Activated T-helper 1 cell treated with anti-CD3 and anti-CD28 coated beads, Interleukin-12 subunit alpha, Interleukin-12 subunit beta, Interleukin-2, Interleukin-4 antibody, amounts not matched to agents 30 ng/mL and 10 ng/mL and 1 ng/mL, durations not matched to agents 14 hours and 24 hours and 36 hours (primary cell): ENCODE measurements at regions of chr22 and their contacts with region 1.

Region 1: DNA sequence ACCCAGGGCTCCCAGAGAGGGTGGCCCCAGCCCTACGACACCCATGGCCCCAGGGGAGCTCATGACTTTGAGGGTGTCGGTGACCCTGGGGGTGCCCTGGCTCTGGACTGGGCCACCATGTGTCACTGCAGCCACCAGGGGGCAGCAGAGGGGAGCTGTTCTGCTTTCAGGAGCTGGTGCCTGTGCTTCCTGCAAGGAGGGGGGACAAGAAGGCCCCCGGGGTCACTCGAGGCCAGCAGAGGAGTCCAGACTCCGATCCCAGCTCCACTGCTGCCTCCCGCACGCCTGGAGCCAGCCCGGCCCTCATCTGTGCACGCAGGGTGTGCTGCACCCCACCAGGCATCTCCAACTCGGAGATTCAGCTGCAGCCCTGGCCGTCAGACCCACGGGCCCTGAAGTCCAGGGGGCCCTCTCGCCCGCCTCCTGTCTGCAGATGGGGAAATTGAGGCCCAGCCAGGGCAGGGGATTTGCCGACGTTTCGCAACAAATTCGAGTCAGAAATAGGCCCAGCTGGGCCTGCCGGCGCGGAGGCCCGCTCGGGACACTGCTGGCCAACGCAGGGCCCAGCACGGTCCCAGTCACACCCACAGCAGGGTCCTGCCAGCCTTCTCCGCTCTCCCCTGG is 29.5 kb upstream of the WNT7B start:
- DNase-seq: peak; percentile 75
- H3K4me3 Mint-ChIP-seq: no peak overlapping the region
- H3K27ac Mint-ChIP-seq: no peak overlapping the region
- H3K4me1 Mint-ChIP-seq: peaks cover 5% of the 10 kb centered on the region
- H3K27me3 Mint-ChIP-seq: peaks cover 2% of the 10 kb centered on the region

Region 2: GRCh38 chr22:45911601-45912271 is 94.8 kb before region 1 on chr22:
- intact Hi-C with region 1: no loop called
- DNase-seq: no peak
- H3K4me3 Mint-ChIP-seq: no peak overlapping the region
- H3K27ac Mint-ChIP-seq: no peak overlapping the region
- H3K4me1 Mint-ChIP-seq: no peaks in the 10 kb centered on the region
- H3K27me3 Mint-ChIP-seq: no peaks in the 10 kb centered on the region

Region 3: DNA sequence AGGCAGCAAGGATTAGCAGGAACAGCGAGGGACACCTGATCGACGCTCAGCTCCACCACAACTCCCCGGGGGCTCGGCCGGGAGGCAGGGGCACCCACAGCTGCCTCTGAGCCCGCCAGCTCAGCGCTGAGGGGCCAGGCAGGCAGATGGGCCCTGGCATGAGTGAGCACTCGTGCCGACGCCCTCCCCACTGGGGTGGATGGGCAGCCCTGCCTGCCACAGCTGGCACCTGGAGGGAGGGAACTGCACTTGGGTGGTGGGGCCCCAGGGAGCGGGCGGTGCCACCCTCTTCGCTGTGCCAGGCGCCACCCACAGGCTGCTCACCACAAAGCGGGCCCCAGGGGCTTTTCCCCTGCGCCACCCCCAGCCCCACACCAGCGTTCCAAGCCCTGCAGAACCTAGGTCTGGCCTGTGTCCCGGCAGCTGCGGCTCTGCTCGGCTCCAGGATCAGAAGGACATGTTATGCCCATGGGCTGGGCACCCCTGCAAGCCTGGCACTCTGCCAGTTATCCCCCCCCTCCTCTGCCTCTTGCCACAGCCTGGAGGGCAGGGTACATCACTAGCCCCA is 58.3 kb before region 1 on chr22:
- intact Hi-C with region 1: no loop called
- DNase-seq: no peak
- H3K4me3 Mint-ChIP-seq: no peak overlapping the region
- H3K27ac Mint-ChIP-seq: no peak overlapping the region
- H3K4me1 Mint-ChIP-seq: no peaks in the 10 kb centered on the region
- H3K27me3 Mint-ChIP-seq: no peaks in the 10 kb centered on the region

Region 4: GRCh38 chr22:45994491-45995404 is 11.7 kb before region 1 on chr22:
- intact Hi-C with region 1: loop called (anchors 1 kb)
- DNase-seq: peak; percentile 58
- H3K4me3 Mint-ChIP-seq: no peak overlapping the region
- H3K27ac Mint-ChIP-seq: no peak overlapping the region
- H3K4me1 Mint-ChIP-seq: no peaks in the 10 kb centered on the region
- H3K27me3 Mint-ChIP-seq: peaks cover 4% of the 10 kb centered on the region

Region 5: GRCh38 chr22:46287873-46288751 is 281.6 kb after region 1 on chr22:
- intact Hi-C with region 1: no loop called
- DNase-seq: peak; percentile 15
- H3K4me3 Mint-ChIP-seq: peak overlapping the region; percentile 79
- H3K27ac Mint-ChIP-seq: peak overlapping the region; percentile 73
- H3K4me1 Mint-ChIP-seq: peaks cover 12% of the 10 kb centered on the region
- H3K27me3 Mint-ChIP-seq: no peaks in the 10 kb centered on the region

Region 6: GRCh38 chr22:46315976-46316375 is 309.5 kb after region 1 on chr22:
- intact Hi-C with region 1: loop called (anchors 2 kb)
- DNase-seq: no peak
- H3K4me3 Mint-ChIP-seq: no peak overlapping the region
- H3K27ac Mint-ChIP-seq: no peak overlapping the region
- H3K4me1 Mint-ChIP-seq: no peaks in the 10 kb centered on the region
- H3K27me3 Mint-ChIP-seq: no peaks in the 10 kb centered on the region

Region 7: GRCh38 chr22:46335201-46336118 is 329.0 kb after region 1 on chr22 and contains the start of gene TRMU:
- intact Hi-C with region 1: no loop called
- DNase-seq: peak; percentile 74
- H3K4me3 Mint-ChIP-seq: peak within 1 kb of the TSS; percentile 95
- H3K27ac Mint-ChIP-seq: peak within 1 kb of the TSS; percentile 96
- H3K4me1 Mint-ChIP-seq: peaks cover 34% of the 10 kb centered on the region
- H3K27me3 Mint-ChIP-seq: no peaks in the 10 kb centered on the region
- total RNA-seq, gene TRMU: 81.0 and 85.5 TPM in 2 replicates